CD14-positive monocyte (primary cell): ENCODE measurements at regions of chr19 and their contacts with region 1.

Region 1: DNA sequence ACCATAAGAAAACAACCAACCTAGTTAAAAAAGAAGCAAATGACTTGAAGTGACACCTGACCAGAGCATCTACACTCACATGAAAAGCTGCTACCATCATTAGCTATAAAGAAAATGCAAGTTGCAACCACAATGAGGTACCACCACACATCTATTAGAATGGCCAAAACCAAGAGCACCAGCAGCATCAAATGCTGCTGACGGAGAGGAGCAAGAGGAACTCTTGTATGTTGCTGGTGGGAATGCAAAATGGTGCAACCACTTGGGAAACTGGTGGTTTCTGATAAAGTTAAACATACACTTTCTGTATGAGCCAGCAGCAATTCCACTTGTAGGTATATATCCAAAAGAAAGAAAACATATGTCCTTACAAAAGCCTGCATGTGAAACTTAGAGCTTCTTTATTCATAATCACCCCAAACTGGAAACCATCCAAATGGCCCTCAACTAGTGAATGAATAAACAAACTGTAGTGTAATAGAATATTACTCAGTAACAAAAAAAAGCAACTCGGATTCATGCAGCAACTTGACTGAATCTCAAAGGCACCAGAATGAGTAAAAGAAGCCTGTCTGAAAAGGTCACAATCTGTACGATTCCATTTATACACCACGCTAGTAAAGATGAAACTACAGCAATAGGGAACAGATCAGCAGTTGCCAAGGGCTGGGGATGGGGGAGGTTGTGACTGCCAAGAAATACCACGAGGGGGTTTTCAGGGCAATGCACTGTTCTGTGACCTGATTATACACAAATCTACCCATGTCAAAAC is 60.9 kb upstream of the RANBP3 start:
- DNase-seq: no peak
- H3K4me3 ChIP-seq: no peak overlapping the region
- H3K4me3 Mint-ChIP-seq: no peak overlapping the region
- H3K27ac ChIP-seq: no peak overlapping the region
- H3K27ac Mint-ChIP-seq: no peak overlapping the region
- H3K4me1 ChIP-seq: no peaks in the 10 kb centered on the region
- H3K4me1 Mint-ChIP-seq: no peaks in the 10 kb centered on the region
- H3K27me3 ChIP-seq: no peaks in the 10 kb centered on the region
- H3K27me3 Mint-ChIP-seq: no peaks in the 10 kb centered on the region
- CTCF ChIP-seq: no peak

Region 2: GRCh38 chr19:6292006-6292405 is 253.2 kb after region 1 on chr19:
- intact Hi-C with region 1: loop called in 1 of 2 experiments (anchors 10 kb)
- DNase-seq: no peak
- H3K4me3 ChIP-seq: peak overlapping the region in 1 of 3 experiments; percentile 8
- H3K4me3 Mint-ChIP-seq: no peak overlapping the region
- H3K27ac ChIP-seq: no peak overlapping the region
- H3K27ac Mint-ChIP-seq: no peak overlapping the region
- H3K4me1 ChIP-seq: no peaks in the 10 kb centered on the region
- H3K4me1 Mint-ChIP-seq: no peaks in the 10 kb centered on the region
- H3K27me3 ChIP-seq: no peaks in the 10 kb centered on the region
- H3K27me3 Mint-ChIP-seq: peaks cover 0 to 8% (median 4%) of the 10 kb centered on the region in 3 donors
- CTCF ChIP-seq: no peak